ENCODE measurements at regions of chr15 and their contacts with region 1.

Region 1: DNA sequence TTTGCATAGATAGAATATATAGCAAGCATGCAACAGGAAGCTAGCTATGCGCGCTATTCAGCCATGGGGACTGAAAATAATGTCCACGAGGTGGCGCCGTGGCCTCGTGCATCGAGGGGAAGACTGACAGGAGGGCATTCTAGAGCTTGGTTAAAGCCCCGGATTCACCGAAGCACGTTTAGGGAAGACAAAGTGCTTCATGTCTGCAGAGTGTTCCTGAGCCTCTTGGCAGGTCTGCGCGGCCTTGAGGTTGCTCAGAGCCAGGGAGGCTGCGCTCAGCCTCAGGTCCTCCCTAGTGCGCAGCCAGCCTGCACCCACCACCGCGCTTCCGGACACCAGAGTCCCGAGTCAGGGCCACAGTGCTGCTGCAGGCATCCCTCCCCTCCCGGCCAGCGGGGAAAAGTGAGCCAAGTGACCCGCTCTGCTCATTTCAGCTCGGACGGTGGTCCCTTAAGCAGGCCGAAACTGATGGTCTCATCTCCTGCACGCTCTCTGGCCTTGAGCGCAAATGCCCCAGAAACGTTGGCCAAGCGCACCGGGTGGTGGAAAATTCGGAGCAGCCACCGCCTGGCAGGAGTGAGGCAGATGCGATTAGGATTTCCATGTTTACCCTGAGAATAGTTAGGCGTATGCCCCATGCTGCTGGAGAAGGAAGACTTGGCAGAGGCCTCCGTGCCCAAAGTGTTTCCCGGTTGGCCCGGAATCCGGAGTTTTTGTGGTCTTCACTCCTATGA is 24.8 kb downstream of the GABRA5 start:
- DNase-seq: peak; percentile 80

Region 2: GRCh38 chr15:27017168-27017809 is 125.7 kb after region 1 on chr15:
- in situ Hi-C with region 1: loop called (anchors 10 kb)
- DNase-seq: peak; percentile 77

Measured in KBM-7 (cell line).